WTC11 (cell line): ENCODE measurements at regions of chr19 and their contacts with region 1.

Region 1: GRCh38 chr19:11380653-11381534 is 3.2 kb downstream of the EPOR start:
- DNase-seq: peak; percentile 98
- ATAC-seq: peak; percentile 82
- H3K4me3 Mint-ChIP-seq: peak overlapping the region; percentile 91
- H3K27ac Mint-ChIP-seq: peak overlapping the region; percentile 100
- H3K4me1 Mint-ChIP-seq: peaks cover 32% of the 10 kb centered on the region
- H3K27me3 Mint-ChIP-seq: peaks cover 3% of the 10 kb centered on the region; the same call in 1 of the 2 replicates
- CTCF ChIP-seq: no peak; the same call in 1 of the 2 replicates

Region 2: GRCh38 chr19:11064831-11065303 is 316.0 kb before region 1 on chr19:
- CTCF ChIA-PET with region 1: no interaction called
- POLR2A ChIA-PET with region 1: no interaction called
- DNase-seq: peak; percentile 36
- ATAC-seq: no peak
- H3K4me3 Mint-ChIP-seq: no peak overlapping the region
- H3K27ac Mint-ChIP-seq: peak overlapping the region; percentile 65
- H3K4me1 Mint-ChIP-seq: peaks cover 15% of the 10 kb centered on the region
- H3K27me3 Mint-ChIP-seq: no peaks in the 10 kb centered on the region
- CTCF ChIP-seq: no peak

Region 3: DNA sequence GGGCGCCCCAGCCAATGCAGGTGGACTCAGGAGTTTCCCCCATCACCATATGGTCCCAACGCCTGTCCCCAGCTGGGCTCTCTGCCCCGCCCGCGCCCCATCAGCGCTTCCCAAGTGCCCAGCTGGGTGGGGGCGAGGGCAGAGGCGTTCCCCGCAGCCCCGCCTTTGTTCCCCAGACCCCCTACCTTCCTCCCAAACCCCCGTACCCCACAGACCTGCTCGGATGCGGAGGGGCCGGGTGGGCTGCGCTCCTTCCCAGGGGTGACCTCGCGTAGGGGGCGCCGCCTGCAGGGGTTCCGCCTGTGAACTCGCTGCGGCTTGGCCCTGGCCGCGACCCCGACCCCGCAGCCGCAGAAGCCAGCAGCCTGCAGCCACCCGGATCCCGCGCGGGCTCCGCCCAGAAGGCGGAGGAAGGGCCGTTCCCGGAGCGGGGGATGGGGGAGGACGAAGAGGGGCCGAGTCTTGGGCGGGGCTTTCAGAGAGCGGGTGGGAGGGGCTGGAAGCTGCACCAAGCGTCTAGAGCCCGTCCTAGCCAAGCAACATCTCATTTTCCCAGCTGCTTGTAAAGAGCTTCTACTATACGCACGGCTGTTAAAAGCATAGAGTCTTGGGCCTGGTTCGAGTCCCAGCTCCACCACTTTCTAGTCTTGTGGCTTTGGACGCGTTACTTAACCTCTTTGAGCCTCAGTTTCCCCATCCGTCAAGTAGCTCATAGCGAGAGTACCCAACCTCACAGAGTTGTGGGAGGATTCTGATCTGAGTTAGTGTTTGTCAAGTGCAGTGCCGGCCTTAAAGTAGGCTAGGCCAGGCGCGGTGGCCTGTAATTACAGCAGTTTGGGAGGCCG is 41.4 kb before region 1 on chr19 and contains the start of gene RAB3D:
- CTCF ChIA-PET with region 1: interaction called, 27 read pairs
- POLR2A ChIA-PET with region 1: interaction called, 8 read pairs
- DNase-seq: peak; percentile 98
- ATAC-seq: peak; percentile 99
- H3K4me3 Mint-ChIP-seq: peak within 1 kb of the TSS; percentile 81
- H3K27ac Mint-ChIP-seq: peak within 1 kb of the TSS; percentile 41; the same call in 1 of the 2 replicates
- H3K4me1 Mint-ChIP-seq: peaks cover 7% of the 10 kb centered on the region
- H3K27me3 Mint-ChIP-seq: no peaks in the 10 kb centered on the region
- CTCF ChIP-seq: no peak
- total RNA-seq, gene RAB3D: 18.9 to 27.8 TPM (median 27.0 TPM) in 3 replicates

Region 4: DNA sequence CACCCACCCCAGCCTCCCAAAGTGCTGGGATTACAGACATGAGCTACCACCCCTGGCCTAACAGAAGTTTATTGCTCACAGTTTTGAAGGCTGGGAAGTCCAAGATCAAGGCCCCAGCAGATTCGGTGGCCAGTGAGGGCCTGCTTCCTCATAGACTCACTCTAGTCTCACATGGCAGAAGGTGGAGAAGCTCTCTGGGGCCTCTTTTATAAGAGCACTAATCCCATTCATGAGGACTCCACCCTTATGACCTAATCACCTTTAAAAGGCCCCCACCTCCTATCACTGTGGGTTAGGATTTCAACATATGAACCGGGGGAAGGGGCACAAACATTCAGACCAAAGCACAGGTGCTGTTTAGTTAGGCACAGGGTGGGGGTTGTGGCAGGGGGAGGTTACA is 13.4 kb before region 1 on chr19:
- CTCF ChIA-PET with region 1: interaction called, 33 read pairs
- POLR2A ChIA-PET with region 1: no interaction called
- DNase-seq: no peak
- ATAC-seq: no peak
- H3K4me3 Mint-ChIP-seq: no peak overlapping the region
- H3K27ac Mint-ChIP-seq: no peak overlapping the region
- H3K4me1 Mint-ChIP-seq: peaks cover 1% of the 10 kb centered on the region; the same call in 1 of the 2 replicates
- H3K27me3 Mint-ChIP-seq: no peaks in the 10 kb centered on the region
- CTCF ChIP-seq: no peak

Region 5: GRCh38 chr19:11405846-11406643 is 25.2 kb after region 1 on chr19:
- CTCF ChIA-PET with region 1: interaction called, 66 read pairs
- POLR2A ChIA-PET with region 1: no interaction called
- DNase-seq: peak; percentile 75
- ATAC-seq: peak; percentile 96
- H3K4me3 Mint-ChIP-seq: no peak overlapping the region
- H3K27ac Mint-ChIP-seq: no peak overlapping the region
- H3K4me1 Mint-ChIP-seq: no peaks in the 10 kb centered on the region
- H3K27me3 Mint-ChIP-seq: no peaks in the 10 kb centered on the region
- CTCF ChIP-seq: no peak

Region 6: DNA sequence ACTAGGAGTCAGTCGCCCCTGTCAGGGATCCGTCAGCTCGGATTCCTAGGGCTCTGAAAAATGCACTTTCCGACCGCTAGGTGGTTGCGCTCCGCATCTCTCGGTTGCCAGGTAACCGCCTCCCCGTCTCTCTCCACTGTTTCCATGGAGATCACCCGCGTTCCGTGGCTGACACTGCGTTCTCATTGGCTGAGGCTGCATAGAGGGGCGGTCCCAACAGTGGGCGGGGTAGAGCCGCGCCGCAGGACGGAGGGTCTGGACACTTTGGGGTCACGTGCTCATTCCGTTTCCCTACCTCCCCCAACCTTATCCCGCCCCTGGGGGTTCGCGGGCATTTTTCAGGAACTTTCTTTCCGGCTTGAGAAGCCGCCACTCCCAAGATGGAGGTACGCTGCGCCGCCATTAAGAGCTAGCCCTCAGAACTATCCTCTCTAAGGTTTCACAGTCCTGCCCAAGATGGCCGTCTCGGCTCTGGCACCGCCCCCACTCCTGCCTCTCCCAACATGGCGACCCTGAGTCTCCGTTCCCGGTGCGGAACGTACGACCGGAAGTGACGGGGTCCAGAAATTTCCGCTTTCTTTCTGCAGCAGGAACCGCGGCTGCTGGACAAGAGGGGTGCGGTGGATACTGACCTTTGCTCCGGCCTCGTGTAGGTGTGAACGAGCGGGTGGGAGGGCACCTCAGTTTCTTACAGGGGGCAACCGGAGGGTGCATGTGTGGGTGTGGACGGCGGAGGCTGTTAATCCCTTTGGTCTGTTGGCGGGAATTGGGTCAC is 54.4 kb after region 1 on chr19 and contains the starts of genes ODAD3 and PRKCSH:
- CTCF ChIA-PET with region 1: interaction called, 57 read pairs
- POLR2A ChIA-PET with region 1: interaction called, 7 read pairs
- DNase-seq: peak; percentile 99
- ATAC-seq: peak; percentile 91
- H3K4me3 Mint-ChIP-seq: peak within 1 kb of the TSS; percentile 96
- H3K27ac Mint-ChIP-seq: peak within 1 kb of the TSS; percentile 97
- H3K4me1 Mint-ChIP-seq: peaks cover 11% of the 10 kb centered on the region
- H3K27me3 Mint-ChIP-seq: no peaks in the 10 kb centered on the region
- CTCF ChIP-seq: peak; percentile 95
- total RNA-seq, gene ODAD3: 4.1 to 5.8 TPM (median 4.8 TPM) in 3 replicates
- total RNA-seq, gene PRKCSH: 396 to 405 TPM (median 402 TPM) in 3 replicates

Region 7: DNA sequence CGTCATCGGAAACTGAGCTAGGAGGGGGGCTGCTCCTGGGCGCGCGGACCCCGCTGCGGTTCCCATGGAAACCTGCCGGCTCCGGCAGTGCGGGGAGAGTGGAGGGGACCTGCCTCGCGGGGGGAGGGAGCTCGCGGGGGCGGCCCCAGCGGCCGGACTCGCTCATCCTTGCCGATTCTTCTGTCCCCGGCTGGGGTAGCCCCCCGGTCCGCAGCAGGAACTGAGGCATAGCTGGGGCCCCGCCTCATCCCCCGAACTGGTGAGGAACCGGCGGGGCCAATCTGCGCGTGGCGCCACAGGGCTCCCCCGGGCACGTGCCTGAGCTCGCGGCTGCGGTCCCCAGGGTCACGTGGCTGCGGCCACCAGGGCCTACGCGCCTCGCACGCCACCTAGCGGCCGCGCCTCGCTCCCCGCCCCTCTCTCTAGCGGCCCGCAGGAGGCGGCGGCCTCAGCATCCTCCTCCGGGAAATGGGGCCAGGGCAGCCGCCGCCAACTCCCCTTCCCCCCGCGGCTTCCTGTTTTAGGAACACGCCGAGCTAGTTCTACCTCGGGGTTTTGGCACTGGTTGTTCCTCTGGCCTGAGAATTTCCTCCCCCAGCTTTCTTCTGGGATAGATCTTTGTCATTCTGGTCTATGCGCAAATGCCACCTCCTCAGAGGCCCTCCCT is 101.6 kb after region 1 on chr19:
- CTCF ChIA-PET with region 1: interaction called, 36 read pairs
- POLR2A ChIA-PET with region 1: interaction called, 5 read pairs
- DNase-seq: peak; percentile 89
- ATAC-seq: peak; percentile 8; the same call in 1 of the 2 replicates
- H3K4me3 Mint-ChIP-seq: peak overlapping the region; percentile 62
- H3K27ac Mint-ChIP-seq: no peak overlapping the region
- H3K4me1 Mint-ChIP-seq: peaks cover 13% of the 10 kb centered on the region
- H3K27me3 Mint-ChIP-seq: peaks cover 48% of the 10 kb centered on the region
- CTCF ChIP-seq: peak; percentile 97